ENCODE measurements at regions of chr4 and their contacts with region 1.

Region 1: DNA sequence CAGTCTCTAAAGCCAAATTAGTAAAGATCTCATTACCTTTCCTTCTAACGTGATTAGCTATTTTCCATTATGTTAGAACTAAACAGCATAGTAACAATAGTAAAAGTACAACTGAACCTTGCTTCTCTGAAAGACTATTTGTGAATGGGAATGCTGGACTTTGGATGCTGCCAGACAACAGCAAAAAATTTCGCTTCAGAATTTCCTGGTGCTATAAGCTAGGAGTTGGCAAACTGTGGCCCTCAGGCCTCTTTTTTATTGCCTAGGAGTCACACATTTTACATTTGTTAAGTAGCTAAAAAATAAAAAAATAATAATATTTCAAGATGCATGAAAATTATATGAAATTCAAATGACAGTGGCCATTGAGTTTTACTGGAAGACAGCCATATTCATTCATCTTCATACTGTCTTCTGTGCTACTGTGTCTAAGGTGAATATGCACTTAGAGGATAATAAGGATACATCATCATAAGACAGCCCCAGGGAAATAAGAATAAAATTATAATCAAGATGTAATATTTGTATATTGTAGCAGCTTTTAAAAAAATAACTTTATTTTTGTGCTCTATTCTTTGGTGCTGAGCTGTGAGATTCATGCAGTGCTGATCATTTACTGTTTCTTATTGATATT is 34.6 kb downstream of the RASGEF1B start:
- DNase-seq: no peak
- H3K4me3 Mint-ChIP-seq: no peak overlapping the region
- H3K27ac Mint-ChIP-seq: no peak overlapping the region
- H3K4me1 Mint-ChIP-seq: no peaks in the 10 kb centered on the region
- H3K27me3 Mint-ChIP-seq: no peaks in the 10 kb centered on the region
- CTCF ChIP-seq: no peak

Region 2: GRCh38 chr4:80751200-80751599 is 685.9 kb before region 1 on chr4:
- CTCF ChIA-PET with region 1: no interaction called
- POLR2A ChIA-PET with region 1: no interaction called
- intact Hi-C with region 1: no loop called
- DNase-seq: no peak
- H3K4me3 Mint-ChIP-seq: no peak overlapping the region
- H3K27ac Mint-ChIP-seq: no peak overlapping the region
- H3K4me1 Mint-ChIP-seq: peaks cover 10% of the 10 kb centered on the region
- H3K27me3 Mint-ChIP-seq: no peaks in the 10 kb centered on the region
- CTCF ChIP-seq: no peak

Region 3: GRCh38 chr4:81421346-81422218 is 15.5 kb before region 1 on chr4:
- CTCF ChIA-PET with region 1: interaction called, 6 read pairs
- POLR2A ChIA-PET with region 1: interaction called, 17 read pairs
- intact Hi-C with region 1: no loop called
- DNase-seq: peak; percentile 88
- H3K4me3 Mint-ChIP-seq: no peak overlapping the region
- H3K27ac Mint-ChIP-seq: peak overlapping the region; percentile 95
- H3K4me1 Mint-ChIP-seq: peaks cover 22% of the 10 kb centered on the region
- H3K27me3 Mint-ChIP-seq: no peaks in the 10 kb centered on the region
- CTCF ChIP-seq: no peak

Measured in MCF 10A (cell line).